HAP-1 (cell line): ENCODE measurements at regions of chr7 and their contacts with region 1.

Region 1: GRCh38 chr7:32204361-32205018 is 134.3 kb upstream of the PDE1C start:
- DNase-seq: peak; percentile 46 to 55
- H3K4me3 ChIP-seq: no peak overlapping the region
- H3K4me1 ChIP-seq: no peaks in the 10 kb centered on the region
- H3K27me3 ChIP-seq: no peaks in the 10 kb centered on the region

Region 2: GRCh38 chr7:31648288-31648687 is 556.2 kb before region 1 on chr7:
- in situ Hi-C with region 1: no loop called
- DNase-seq: no peak
- H3K4me3 ChIP-seq: no peak overlapping the region
- H3K4me1 ChIP-seq: no peaks in the 10 kb centered on the region
- H3K27me3 ChIP-seq: peaks cover 5% of the 10 kb centered on the region; the same call in 1 of the 2 replicates

Region 3: GRCh38 chr7:31744294-31744874 is 460.1 kb before region 1 on chr7:
- in situ Hi-C with region 1: loop called (anchors 10 kb)
- DNase-seq: peak; percentile 48 to 67
- H3K4me3 ChIP-seq: no peak overlapping the region
- H3K4me1 ChIP-seq: no peaks in the 10 kb centered on the region
- H3K27me3 ChIP-seq: no peaks in the 10 kb centered on the region